Breast epithelium (tissue), 4 donors: ENCODE measurements at regions of chr13 and their contacts with region 1.

Region 1: DNA sequence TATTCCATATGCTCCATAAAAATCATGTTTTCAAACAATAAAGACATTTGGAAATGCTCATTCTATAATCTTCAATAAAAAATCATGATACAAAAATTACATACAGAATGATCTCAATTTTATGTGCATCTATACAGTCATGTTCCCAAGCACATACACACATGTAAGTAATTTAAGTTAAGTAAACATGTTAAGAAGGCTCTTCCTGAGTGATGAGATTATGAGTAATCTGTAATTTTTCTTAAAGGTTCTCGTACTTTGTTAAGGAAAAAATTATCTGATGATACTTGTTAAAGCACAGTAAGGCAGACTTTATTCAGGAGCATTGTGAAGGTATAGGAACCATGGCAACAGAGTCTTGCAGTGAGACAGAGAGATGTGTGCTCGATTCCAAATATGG is 30.0 kb upstream of the DLEU7 start:
- DNase-seq: no peak
- H3K4me3 ChIP-seq: no peak overlapping the region
- H3K27ac ChIP-seq: no peak overlapping the region
- H3K4me1 ChIP-seq: no peaks in the 10 kb centered on the region
- H3K27me3 ChIP-seq: no peaks in the 10 kb centered on the region
- CTCF ChIP-seq: no peak
- POLR2A ChIP-seq: no peak

Region 2: DNA sequence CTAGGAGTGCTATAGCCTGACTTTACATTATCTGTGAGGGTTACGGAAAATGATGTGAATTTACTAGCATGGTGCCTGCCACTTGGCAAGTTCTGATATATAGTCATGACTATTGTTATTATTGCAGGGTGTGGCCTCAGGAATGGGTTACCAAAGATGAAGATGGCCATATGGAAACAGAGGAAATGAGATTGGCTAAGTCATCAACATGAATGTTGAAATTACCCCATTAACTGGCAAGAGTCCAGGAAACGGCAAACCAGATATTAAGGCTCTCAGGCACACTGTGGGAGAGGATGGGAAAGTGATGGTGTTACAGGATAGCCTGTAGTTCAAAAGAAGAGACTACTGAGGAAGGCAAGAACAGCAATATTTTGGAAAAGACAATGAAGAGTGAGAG is 675.0 kb before region 1 on chr13:
- intact Hi-C with region 1: loop called (anchors 5 kb)
- DNase-seq: no peak
- H3K4me3 ChIP-seq: no peak overlapping the region
- H3K27ac ChIP-seq: no peak overlapping the region
- H3K4me1 ChIP-seq: no peaks in the 10 kb centered on the region
- H3K27me3 ChIP-seq: no peaks in the 10 kb centered on the region
- CTCF ChIP-seq: no peak
- POLR2A ChIP-seq: no peak

Region 3: GRCh38 chr13:52118595-52118994 is 1245.1 kb after region 1 on chr13:
- intact Hi-C with region 1: no loop called
- DNase-seq: no peak
- H3K4me3 ChIP-seq: no peak overlapping the region
- H3K27ac ChIP-seq: no peak overlapping the region
- H3K4me1 ChIP-seq: no peaks in the 10 kb centered on the region
- H3K27me3 ChIP-seq: no peaks in the 10 kb centered on the region
- CTCF ChIP-seq: no peak
- POLR2A ChIP-seq: no peak